WTC11 (cell line): ENCODE measurements at regions of chr1 and their contacts with region 1.

Region 1: DNA sequence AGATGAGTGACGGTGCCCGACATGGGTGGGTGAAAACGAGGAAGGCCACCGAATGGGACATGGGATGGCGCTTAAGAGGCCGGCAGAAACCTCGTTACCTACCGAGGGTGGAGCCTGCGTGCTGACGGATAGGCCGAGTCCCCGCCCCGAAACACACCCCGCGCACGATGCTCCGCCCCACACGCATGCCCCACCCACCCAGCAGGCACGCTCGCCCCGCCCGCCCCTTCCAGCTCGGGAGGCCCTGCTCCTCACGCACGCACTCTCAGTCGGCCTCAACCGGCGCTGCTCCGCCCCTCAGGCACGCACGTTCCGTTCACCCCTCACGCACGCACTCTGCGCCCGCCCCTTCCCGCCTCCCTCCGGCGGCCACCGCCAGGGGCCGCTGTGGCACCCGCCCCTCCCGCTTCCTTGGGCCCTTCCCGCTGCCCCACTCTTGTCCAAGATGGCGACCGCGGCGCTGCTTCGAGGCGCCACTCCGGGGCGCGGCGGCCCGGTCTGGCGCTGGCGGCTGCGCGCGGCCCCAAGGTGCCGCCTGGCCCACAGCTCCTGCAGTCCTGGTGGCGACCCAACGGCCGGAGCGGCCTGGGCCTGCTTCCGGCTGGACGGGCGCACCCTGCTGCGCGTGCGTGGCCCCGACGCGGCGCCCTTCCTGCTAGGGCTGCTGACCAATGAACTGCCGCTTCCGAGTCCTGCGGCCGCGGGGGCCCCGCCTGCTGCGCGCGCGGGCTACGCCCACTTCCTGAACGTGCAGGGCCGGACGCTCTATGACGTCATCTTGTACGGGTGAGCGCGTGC is at the start of gene IBA57:
- DNase-seq: peak; percentile 99
- ATAC-seq: peak; percentile 94
- H3K4me3 Mint-ChIP-seq: peak within 1 kb of the TSS; percentile 85
- H3K27ac Mint-ChIP-seq: peak within 1 kb of the TSS; percentile 98
- H3K4me1 Mint-ChIP-seq: peaks cover 13% of the 10 kb centered on the region; the same call in 1 of the 2 replicates
- H3K27me3 Mint-ChIP-seq: peaks cover 6% of the 10 kb centered on the region; the same call in 1 of the 2 replicates
- CTCF ChIP-seq: peak; percentile 71
- total RNA-seq, gene IBA57: 11.4 to 12.5 TPM (median 12.1 TPM) in 3 replicates

Region 2: DNA sequence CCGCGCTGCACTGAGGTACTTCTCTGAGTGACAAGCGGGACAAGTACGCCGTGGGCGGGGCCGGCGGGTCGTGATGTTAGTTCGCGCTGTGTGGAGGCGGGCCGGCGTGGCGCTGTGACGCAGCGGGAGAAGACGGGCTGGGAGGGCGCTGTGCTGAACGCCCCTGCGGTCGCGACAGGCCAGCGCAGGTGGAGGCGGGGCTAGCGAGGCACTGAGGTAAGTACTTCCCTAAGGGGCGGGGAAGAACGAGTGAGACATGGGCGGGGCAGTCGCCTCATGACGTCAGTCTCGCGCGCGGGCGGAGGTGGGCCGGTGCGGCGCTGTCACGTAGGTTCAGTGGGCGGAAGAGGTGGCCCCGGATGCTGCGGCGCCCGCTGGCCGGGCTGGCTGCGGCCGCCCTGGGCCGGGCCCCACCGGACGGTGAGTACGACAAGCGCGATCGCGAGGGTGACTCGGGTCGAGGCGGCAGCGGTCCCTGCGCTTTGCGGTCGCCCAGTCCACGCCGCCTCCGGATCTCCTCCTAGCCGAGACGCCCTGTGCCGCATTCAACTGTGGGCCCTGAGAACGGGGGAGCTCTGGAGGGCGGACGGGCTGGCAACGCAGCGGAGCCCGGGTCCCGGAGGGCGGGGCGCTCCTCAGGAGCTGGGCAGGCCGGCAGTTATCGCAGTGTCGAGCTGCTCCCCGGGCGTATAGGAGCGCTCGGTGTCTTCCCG is 25.5 kb before region 1 on chr1 and contains the start of gene GUK1:
- CTCF ChIA-PET with region 1: interaction called, 14 read pairs
- POLR2A ChIA-PET with region 1: no interaction called
- DNase-seq: peak; percentile 100
- ATAC-seq: peak; percentile 98
- H3K4me3 Mint-ChIP-seq: peak within 1 kb of the TSS; percentile 88
- H3K27ac Mint-ChIP-seq: peak within 1 kb of the TSS; percentile 94
- H3K4me1 Mint-ChIP-seq: peaks cover 7% of the 10 kb centered on the region; the same call in 1 of the 2 replicates
- H3K27me3 Mint-ChIP-seq: peaks cover 34% of the 10 kb centered on the region
- CTCF ChIP-seq: no peak
- total RNA-seq, gene GUK1: 110 to 112 TPM (median 111 TPM) in 3 replicates

Region 3: DNA sequence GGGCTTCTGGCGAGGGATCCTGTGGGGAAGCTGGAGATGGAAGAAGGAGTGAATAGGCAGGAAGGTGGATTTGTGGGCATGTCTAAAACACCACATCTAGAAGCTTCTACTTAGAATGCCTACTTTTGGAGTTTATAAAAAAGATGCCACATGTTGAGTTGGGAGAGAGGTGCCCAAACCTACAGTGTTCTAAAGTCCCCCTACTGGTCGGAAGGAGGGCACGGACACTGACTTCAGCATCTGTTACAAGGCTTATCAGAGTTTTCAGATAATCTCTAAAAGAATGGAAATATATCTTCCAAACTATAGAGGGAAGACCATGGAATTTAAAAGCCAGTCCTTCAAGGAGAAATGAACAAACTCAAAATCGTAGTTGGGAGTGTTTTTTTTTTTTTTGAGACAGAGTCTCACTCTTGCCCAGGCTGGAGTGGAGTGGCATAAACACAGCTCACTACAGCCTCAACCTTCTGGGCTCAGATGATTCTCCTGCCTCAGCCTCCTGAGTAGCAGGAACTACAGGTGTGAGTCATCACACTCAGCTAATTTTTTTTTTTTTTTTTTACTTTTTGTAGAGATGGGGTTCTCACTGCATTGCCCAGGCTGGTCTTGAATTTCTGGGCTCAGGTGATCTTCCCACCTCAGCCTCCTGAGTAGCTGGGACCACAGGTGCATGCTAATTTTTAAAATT is 14.8 kb after region 1 on chr1:
- CTCF ChIA-PET with region 1: interaction called, 18 read pairs
- POLR2A ChIA-PET with region 1: interaction called, 3 read pairs
- DNase-seq: no peak
- ATAC-seq: peak; percentile 76
- H3K4me3 Mint-ChIP-seq: no peak overlapping the region
- H3K27ac Mint-ChIP-seq: no peak overlapping the region; the same call in 1 of the 2 replicates
- H3K4me1 Mint-ChIP-seq: no peaks in the 10 kb centered on the region
- H3K27me3 Mint-ChIP-seq: no peaks in the 10 kb centered on the region
- CTCF ChIP-seq: 0 out of 2 replicates have a peak, but pooled peaks have one; percentile 19